Naive thymus-derived CD4-positive, alpha-beta T cell (primary cell): ENCODE measurements at regions of chr14 and their contacts with region 1.

Region 1: DNA sequence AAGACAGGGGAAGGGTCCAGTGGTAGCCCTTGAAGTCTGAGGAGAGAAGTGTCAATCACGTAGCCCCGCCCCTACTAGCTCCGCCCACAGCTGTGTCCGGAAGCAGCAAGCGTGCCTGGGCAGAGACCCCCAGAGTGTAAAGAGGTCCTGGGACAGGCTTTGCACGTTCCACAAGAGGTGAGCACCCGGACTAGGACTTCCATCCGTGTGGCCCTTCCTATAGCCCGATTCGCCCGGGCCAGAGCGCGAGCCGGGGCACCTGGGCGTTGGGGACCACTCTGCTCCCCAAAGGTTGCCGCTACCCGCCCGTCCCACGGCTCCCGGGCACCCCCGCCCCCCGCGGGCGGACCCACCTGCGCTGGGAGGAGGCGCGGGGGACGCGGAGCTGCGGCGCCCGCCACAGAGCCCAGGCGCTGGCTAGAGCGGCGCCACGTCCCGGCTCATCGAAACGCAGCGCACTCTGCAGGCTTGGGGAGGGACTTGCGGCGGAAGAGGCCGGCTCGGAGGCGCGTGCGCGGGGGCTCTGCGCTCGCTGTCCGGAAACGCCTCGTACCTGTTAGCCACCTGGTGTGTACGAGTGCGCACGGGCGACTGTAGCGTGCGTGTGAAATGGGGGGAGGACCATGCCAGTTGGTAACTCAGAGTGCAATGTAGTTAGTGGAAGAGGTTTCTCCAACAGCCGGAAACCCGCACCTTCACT is at the start of gene RABGGTA:
- DNase-seq: peak; percentile 87 to 97 (median 96)
- ATAC-seq: peak; percentile 91
- H3K4me3 ChIP-seq: peak within 1 kb of the TSS; percentile 80
- H3K4me3 Mint-ChIP-seq: peak within 1 kb of the TSS; percentile 79 to 95 (median 92)
- H3K27ac ChIP-seq: peak within 1 kb of the TSS; percentile 98
- H3K27ac Mint-ChIP-seq: peak within 1 kb of the TSS; percentile 93 to 100 (median 98)
- H3K4me1 ChIP-seq: peaks cover 17 to 23% of the 10 kb centered on the region in 2 donors
- H3K4me1 Mint-ChIP-seq: peaks cover 30 to 52% (median 46%) of the 10 kb centered on the region in 7 donors
- H3K27me3 ChIP-seq: no peaks in the 10 kb centered on the region
- H3K27me3 Mint-ChIP-seq: no peaks in the 10 kb centered on the region
- total RNA-seq, gene RABGGTA: 49.7 to 76.5 (median 55.5) TPM

Region 2: DNA sequence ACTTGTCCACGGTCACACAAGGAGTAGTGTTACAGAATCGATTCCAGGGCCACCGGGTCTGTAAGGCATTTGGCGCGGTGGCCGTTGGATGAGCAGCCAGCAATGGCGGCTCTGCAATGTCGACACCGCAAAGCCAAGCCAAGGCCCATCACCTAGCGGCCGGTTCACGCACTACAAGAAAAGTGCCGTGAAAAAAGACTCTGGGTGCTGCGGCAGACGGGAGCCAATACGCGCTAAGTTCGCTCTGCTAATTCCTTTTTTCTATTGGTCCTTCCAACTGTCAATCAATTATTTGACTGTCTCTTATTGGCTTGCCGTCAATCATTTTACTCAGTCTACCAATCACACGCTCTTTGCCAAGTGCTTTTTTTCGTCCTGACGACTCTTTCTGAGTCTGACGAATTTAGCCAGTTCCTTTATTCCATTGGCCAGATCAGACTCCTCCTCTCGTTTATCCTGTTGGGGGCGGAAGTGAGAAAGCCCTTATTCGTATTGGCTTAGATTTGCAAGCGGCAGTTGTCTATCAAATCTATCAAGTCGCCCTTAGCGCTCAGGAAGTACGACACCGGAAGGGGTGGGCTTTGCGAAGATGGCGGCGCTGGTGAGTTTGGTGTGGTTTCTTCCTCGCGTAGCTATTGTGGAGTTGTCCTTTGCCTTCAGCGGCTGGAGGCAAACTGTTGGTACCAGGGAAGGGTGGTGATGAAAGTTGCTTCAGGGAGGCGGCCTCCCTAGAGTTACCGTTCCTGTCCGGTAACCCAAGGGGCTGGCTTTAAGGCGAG is 802.0 kb before region 1 on chr14 and contains the start of gene NGDN:
- CTCF ChIA-PET with region 1: no interaction called
- POLR2A ChIA-PET with region 1: no interaction called
- intact Hi-C with region 1: loop called in 1 of 2 experiments (anchors 1 kb)
- DNase-seq: peak; percentile 76 to 99 (median 96)
- ATAC-seq: peak; percentile 94
- H3K4me3 ChIP-seq: peak within 1 kb of the TSS; percentile 73
- H3K4me3 Mint-ChIP-seq: peak within 1 kb of the TSS in 1 of 10 donors; percentile 77
- H3K27ac ChIP-seq: peak within 1 kb of the TSS; percentile 94
- H3K27ac Mint-ChIP-seq: peak within 1 kb of the TSS in 2 of 9 donors; percentile 26 to 68
- H3K4me1 ChIP-seq: peaks cover 6 to 11% of the 10 kb centered on the region in 2 donors
- H3K4me1 Mint-ChIP-seq: peaks cover 7 to 10% (median 7%) of the 10 kb centered on the region in 7 donors
- H3K27me3 ChIP-seq: no peaks in the 10 kb centered on the region
- H3K27me3 Mint-ChIP-seq: no peaks in the 10 kb centered on the region
- total RNA-seq, gene NGDN: 52.9 to 152 (median 74.0) TPM

Region 3: GRCh38 chr14:24036169-24036962 is 234.9 kb before region 1 on chr14:
- CTCF ChIA-PET with region 1: interaction called, 4 read pairs
- POLR2A ChIA-PET with region 1: no interaction called
- intact Hi-C with region 1: loop called in 1 of 2 experiments (anchors 1 kb)
- DNase-seq: peak; percentile 46 to 76 (median 63)
- ATAC-seq: peak; percentile 84
- H3K4me3 ChIP-seq: peak overlapping the region; percentile 80
- H3K4me3 Mint-ChIP-seq: peak overlapping the region; percentile 93 to 100 (median 96)
- H3K27ac ChIP-seq: peak overlapping the region; percentile 65
- H3K27ac Mint-ChIP-seq: peak overlapping the region; percentile 68 to 95 (median 88)
- H3K4me1 ChIP-seq: no peaks in the 10 kb centered on the region
- H3K4me1 Mint-ChIP-seq: peaks cover 6 to 16% (median 10%) of the 10 kb centered on the region in 7 donors
- H3K27me3 ChIP-seq: no peaks in the 10 kb centered on the region
- H3K27me3 Mint-ChIP-seq: peaks cover 0 to 3% (median 0%) of the 10 kb centered on the region in 5 donors

Region 4: DNA sequence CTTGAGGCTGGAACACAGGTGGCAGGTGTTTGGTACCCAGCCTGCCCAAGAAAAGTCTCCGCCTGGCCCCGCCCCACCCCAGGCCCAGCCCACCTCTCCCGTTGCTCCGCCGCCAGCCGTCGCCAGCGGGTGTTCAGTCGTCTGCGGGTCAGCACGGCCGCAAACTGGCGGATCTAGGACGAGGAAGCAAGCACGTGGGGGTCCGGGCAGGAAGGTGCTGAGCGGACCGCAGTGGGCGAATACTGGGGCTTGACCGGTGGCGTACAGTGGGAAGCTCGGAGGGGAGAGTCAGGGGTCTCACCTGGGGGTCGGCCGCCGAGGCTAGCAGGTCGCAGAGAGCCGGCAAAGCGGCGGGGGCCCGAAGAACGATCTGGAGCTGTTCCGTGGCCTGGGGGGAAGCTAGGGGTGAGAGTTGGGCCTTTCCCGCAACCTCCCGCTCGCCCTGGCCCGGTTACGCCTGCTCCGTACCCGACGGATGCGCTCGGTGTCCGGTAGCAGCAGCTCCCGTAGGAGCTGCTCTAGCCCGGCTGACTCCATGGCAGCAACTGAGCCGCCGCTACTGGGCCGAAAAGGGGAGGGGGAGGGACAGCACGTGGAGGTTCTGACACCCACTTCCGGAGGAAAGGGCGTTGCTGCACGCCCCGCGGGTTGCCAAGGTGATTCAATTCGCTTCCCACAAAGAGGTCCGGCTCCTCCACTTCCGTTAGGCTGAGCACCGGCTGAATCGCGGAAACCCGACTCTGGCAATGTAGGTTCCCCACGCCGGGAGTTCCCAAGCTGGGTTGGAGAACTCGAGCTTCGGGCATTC is 82.8 kb before region 1 on chr14 and contains the start of gene IPO4:
- CTCF ChIA-PET with region 1: no interaction called
- POLR2A ChIA-PET with region 1: no interaction called
- intact Hi-C with region 1: loop called (anchors 1 kb)
- DNase-seq: peak; percentile 75 to 97 (median 94)
- ATAC-seq: peak; percentile 97
- H3K4me3 ChIP-seq: peak within 1 kb of the TSS; percentile 89
- H3K4me3 Mint-ChIP-seq: peak within 1 kb of the TSS; percentile 89 to 96 (median 90)
- H3K27ac ChIP-seq: peak within 1 kb of the TSS; percentile 83
- H3K27ac Mint-ChIP-seq: peak within 1 kb of the TSS; percentile 82 to 96 (median 92)
- H3K4me1 ChIP-seq: peaks cover 15 to 16% of the 10 kb centered on the region in 2 donors
- H3K4me1 Mint-ChIP-seq: peaks cover 24 to 53% (median 47%) of the 10 kb centered on the region in 7 donors
- H3K27me3 ChIP-seq: no peaks in the 10 kb centered on the region
- H3K27me3 Mint-ChIP-seq: no peaks in the 10 kb centered on the region
- total RNA-seq, gene IPO4: 21.5 to 45.2 (median 42.2) TPM

Region 5: GRCh38 chr14:24232121-24232644 is 39.1 kb before region 1 on chr14 and contains the start of gene NEDD8:
- CTCF ChIA-PET with region 1: interaction called, 3 read pairs
- POLR2A ChIA-PET with region 1: interaction called, 7 read pairs
- intact Hi-C with region 1: loop called (anchors 1 kb)
- DNase-seq: peak; percentile 72 to 91 (median 88)
- ATAC-seq: peak; percentile 91
- H3K4me3 ChIP-seq: peak within 1 kb of the TSS; percentile 99
- H3K4me3 Mint-ChIP-seq: peak within 1 kb of the TSS; percentile 86 to 100 (median 96)
- H3K27ac ChIP-seq: peak within 1 kb of the TSS; percentile 89
- H3K27ac Mint-ChIP-seq: peak within 1 kb of the TSS; percentile 89 to 98 (median 93)
- H3K4me1 ChIP-seq: peaks cover 11 to 27% of the 10 kb centered on the region in 2 donors
- H3K4me1 Mint-ChIP-seq: peaks cover 36 to 79% (median 63%) of the 10 kb centered on the region in 7 donors
- H3K27me3 ChIP-seq: no peaks in the 10 kb centered on the region
- H3K27me3 Mint-ChIP-seq: no peaks in the 10 kb centered on the region
- total RNA-seq, gene NEDD8: 73.5 to 175 (median 106) TPM

Region 6: DNA sequence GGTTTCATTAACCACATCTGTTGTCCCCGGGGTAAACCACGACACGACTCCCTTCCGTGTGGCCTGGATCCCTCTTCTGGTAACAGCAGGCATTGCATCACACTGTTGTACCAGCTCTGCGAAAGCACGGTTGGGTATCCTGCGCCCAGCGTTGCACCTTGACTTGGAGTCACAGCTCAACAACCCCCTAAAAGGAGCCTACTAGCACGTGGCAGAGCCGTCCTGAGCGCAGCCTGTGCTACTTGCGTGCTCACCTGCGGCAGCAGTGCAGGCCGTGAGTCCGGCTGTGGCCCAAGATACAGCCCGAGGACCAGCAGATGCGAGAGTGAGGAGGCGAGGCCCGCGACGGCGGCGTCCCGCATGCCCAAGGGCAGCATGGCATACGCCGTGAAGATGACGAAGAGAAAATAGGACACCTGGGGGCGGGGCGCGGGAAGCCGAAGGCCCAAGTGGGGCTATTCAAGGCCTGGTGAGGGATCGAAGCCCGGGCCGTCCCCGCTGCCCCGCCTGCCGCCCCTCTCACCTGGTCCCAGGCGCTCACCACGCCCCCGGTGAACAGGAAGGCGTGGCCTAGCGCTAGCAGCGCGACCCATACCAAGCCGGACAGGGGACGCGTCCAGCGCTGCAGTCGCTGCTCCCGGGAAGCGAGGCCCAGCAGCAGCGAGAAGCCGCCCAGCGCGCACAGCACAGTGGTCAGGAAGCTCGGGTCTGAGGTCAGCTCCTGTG is 61.1 kb after region 1 on chr14:
- CTCF ChIA-PET with region 1: interaction called, 9 read pairs
- POLR2A ChIA-PET with region 1: interaction called, 3 read pairs
- intact Hi-C with region 1: loop called (anchors 1 to 2 kb)
- DNase-seq: peak; percentile 56 to 93 (median 87)
- ATAC-seq: peak; percentile 90
- H3K4me3 ChIP-seq: peak overlapping the region; percentile 43
- H3K4me3 Mint-ChIP-seq: peak overlapping the region; percentile 66 to 94 (median 83)
- H3K27ac ChIP-seq: no peak overlapping the region
- H3K27ac Mint-ChIP-seq: peak overlapping the region; percentile 57 to 93 (median 84)
- H3K4me1 ChIP-seq: peaks cover 37 to 59% of the 10 kb centered on the region in 2 donors
- H3K4me1 Mint-ChIP-seq: peaks cover 25 to 62% (median 40%) of the 10 kb centered on the region in 7 donors
- H3K27me3 ChIP-seq: peaks cover 7 to 13% of the 10 kb centered on the region in 2 donors
- H3K27me3 Mint-ChIP-seq: peaks cover 9 to 46% (median 17%) of the 10 kb centered on the region in 5 donors